ENCODE measurements at regions of chr20 and their contacts with region 1.

Region 1: GRCh38 chr20:4069751-4070150 is 54.4 kb upstream of the RNF24 start:
- H3K4me3 ChIP-seq: no peak overlapping the region
- H3K27ac ChIP-seq: no peak overlapping the region
- H3K4me1 ChIP-seq: peaks cover 3% of the 10 kb centered on the region
- CTCF ChIP-seq: no peak

Region 2: DNA sequence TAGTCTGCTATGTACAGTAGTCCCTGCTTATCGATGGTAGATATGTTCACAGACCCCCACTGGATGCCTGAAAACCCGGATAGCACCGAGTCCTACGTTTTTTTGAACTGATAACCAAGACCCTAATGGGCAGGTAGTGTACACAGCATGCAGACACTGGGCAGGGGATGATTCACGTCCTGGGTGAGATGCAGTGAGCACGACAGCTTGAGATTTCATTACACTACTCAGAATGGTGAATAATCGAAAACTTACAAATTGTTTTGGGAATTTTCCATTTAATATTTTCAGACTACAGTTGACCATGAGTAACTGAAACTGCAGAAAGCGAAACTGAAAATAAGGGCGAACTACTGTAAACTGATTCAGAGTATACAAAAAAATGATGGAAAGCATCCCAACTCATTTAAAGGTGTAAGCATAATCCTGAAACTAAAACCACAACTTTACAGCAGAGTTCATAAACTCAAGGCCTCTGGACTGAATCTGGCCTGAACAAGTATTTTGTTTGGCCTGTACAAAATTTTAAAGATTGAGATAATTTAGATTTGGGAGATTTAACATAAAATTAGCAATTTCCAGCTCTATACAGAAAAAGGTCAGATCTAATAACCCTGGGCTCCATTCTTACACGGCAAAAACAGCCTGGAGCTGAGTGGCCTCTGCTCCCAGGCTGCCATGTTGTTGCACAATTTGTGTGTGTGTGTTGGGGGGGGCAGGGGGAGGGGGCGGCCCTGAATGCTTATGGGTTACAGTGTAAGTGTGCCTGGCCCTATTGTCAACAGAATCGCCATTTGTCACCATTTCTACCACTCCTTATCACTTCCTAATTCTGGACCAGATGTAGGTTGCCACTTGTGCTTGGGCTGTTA is 89.3 kb before region 1 on chr20:
- CTCF ChIA-PET with region 1: interaction called, 14 read pairs
- POLR2A ChIA-PET with region 1: no interaction called
- H3K4me3 ChIP-seq: no peak overlapping the region
- H3K27ac ChIP-seq: peak overlapping the region; percentile 14; the same call in 1 of the 2 replicates
- H3K4me1 ChIP-seq: peaks cover 8% of the 10 kb centered on the region
- CTCF ChIP-seq: no peak

Region 3: DNA sequence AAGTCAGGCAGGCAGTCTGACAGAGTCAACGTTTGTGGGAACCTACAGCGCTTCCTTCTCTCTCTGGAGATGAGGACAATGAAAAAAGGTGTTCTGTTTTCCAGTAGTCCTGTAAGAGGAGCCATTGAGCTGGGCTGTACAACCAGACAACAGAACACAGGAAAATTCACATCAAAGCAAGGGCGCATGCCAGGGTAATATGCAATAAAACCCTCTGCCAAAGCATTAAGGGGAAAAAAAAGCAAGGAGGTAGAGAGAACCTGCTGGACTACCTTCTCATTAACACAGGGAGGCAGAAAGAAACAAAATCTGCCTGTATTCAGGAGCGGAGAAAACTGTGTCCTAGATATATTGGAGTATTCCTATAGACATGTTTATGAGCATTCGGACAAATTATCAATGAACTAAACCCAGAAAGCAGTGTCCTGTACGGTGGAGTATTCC is 55.7 kb before region 1 on chr20:
- CTCF ChIA-PET with region 1: interaction called, 90 read pairs
- POLR2A ChIA-PET with region 1: interaction called, 3 read pairs
- H3K4me3 ChIP-seq: peak overlapping the region; percentile 77; the same call in 1 of the 2 replicates
- H3K27ac ChIP-seq: no peak overlapping the region
- H3K4me1 ChIP-seq: peaks cover 13% of the 10 kb centered on the region
- CTCF ChIP-seq: peak; percentile 77

Region 4: DNA sequence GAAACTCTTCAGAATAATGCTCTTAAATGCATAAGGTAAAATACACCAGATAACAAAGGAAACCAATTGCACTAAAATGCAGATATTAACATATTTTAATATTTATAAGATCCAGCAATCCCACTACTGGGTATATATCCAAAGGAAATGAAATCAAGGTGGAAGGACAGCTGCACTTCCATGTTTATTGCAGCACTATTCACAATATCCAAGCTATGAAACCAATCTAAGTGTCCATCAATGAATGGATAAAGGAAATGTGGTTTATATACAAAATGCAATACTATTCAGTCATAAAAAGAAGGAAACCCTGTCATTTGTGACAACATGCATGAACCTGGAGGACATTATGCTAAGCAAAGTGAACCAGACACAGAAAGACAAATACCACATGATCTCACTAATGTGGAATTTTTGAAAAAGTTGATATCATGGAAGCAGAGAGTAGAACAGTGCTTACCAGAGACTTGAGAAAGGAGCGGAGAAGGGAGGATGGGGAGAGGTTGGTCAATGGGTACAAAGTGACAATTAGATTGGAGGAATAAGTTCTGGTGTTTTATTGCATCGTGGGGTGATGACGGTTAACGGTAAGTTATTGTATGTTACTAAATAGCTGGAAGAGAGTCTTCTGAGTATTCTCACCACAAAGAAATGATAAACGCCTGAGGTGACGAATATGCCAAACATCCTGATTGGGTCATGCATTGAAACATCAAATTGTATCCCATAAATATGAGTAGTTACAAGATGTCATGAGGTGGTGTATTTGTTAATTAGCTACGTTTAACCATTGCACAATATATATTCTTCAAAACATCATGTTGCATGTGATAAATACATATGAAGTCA is 16.5 kb before region 1 on chr20:
- CTCF ChIA-PET with region 1: interaction called, 35 read pairs
- POLR2A ChIA-PET with region 1: interaction called, 3 read pairs
- H3K4me3 ChIP-seq: no peak overlapping the region
- H3K27ac ChIP-seq: no peak overlapping the region
- H3K4me1 ChIP-seq: 0 out of 2 replicates have a peak, but pooled peaks cover 2% of the 10 kb centered on the region
- CTCF ChIP-seq: no peak

Region 5: DNA sequence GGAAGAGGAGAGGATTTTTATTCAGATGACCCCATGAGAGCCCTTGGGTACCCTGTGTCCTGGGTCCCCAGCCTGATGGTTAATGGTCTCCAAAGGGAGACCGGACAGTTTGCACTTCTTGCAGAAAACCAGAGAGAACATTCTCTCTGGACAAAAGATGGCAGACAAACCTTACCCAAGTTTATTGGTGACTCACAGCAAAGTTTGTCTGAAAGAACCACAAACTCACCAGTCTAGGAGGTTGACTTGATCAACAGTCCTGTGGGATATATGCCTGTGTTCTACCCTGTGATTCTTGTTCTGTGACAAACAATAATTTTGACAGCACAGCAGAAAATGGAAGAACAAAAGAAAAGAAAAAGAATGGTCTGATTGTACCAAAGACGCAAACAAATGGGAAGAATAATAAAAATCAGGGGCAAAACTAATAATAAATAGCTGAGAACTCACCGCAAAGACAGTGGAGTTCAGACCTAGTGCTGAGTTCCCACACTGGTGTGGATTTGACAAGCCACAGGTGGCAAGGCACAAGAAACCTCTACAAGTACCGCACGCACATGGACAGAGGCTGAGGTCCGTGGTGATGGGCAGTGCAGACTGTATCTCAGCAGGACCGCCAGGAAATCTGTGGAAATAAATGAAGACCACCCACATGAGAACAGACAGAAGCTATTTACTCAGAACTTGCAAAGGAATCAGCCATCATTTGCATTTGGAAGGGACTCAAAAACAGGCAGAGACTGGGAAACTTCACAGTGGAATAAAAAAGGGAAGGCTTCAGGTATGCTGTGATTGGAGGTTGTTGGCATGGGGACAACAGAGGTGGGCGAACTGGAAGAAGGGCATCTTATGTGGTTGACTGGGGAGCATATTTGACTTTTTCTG is 191.8 kb after region 1 on chr20:
- CTCF ChIA-PET with region 1: no interaction called
- POLR2A ChIA-PET with region 1: no interaction called
- H3K4me3 ChIP-seq: no peak overlapping the region
- H3K27ac ChIP-seq: no peak overlapping the region
- H3K4me1 ChIP-seq: no peaks in the 10 kb centered on the region
- CTCF ChIP-seq: no peak

Region 6: GRCh38 chr20:4684837-4685413 is 615.2 kb after region 1 on chr20:
- CTCF ChIA-PET with region 1: no interaction called
- POLR2A ChIA-PET with region 1: no interaction called
- H3K4me3 ChIP-seq: no peak overlapping the region
- H3K27ac ChIP-seq: no peak overlapping the region
- H3K4me1 ChIP-seq: peaks cover 21% of the 10 kb centered on the region
- CTCF ChIP-seq: no peak

Measured in HEK293 (cell line).